ENCODE measurements at regions of chr1 and their contacts with region 1.

Region 1: DNA sequence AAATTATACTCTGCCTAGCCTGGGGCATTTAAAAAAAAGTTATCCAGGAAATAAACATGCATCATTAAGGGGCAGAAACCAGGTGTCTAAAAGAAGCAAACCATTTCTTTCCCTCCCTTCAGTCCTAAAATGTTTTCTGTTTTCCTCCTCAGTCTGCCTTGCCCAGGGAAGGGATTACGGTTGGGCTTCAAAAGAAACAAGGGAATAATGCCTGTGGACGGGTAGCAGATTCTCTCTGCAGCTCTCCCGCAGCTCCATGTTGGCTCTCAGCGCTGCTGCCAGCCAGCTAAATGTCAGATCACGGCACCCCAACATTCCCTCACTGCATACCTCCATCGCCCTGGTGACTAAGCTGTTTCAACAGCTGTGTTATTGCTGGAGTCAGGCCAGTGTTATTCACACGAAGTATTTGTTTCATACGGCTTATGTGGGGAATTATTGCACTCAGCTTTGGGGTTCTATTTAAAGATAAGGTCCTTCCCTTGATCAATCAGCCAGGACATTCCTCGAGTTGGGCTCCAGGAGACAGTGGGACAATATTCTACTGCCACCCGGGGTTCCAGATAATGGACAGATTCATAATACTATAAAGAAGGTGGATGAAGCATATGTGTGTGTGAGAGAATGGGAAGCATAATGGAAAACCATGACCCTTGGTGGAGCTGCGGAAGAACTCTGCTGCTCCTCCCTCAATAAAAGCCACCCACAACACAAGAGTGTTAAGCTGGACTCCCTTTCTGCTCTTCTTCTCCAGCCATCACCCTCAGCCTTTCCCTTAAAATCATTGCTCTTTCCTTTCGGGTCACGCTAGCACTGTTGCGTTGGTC is 58.2 kb downstream of the WLS start:
- DNase-seq: peak; percentile 76 to 91
- H3K4me3 ChIP-seq: peak overlapping the region; percentile 12; the same call in 1 of the 2 replicates
- H3K27ac ChIP-seq: 0 out of 2 replicates have a peak overlapping the region, but pooled peaks have one; percentile 3
- H3K4me1 ChIP-seq: peaks cover 53% of the 10 kb centered on the region
- H3K27me3 ChIP-seq: no peaks in the 10 kb centered on the region
- CTCF ChIP-seq: no peak

Region 2: GRCh38 chr1:67700692-67701410 is 473.3 kb before region 1 on chr1:
- CTCF ChIA-PET with region 1: no interaction called
- POLR2A ChIA-PET with region 1: no interaction called
- intact Hi-C with region 1: loop called (anchors 10 kb)
- DNase-seq: peak; percentile 84 to 93
- H3K4me3 ChIP-seq: no peak overlapping the region
- H3K27ac ChIP-seq: peak overlapping the region; percentile 63
- H3K4me1 ChIP-seq: peaks cover 18% of the 10 kb centered on the region
- H3K27me3 ChIP-seq: no peaks in the 10 kb centered on the region
- CTCF ChIP-seq: peak; percentile 55; the same call in 1 of the 2 replicates

Region 3: GRCh38 chr1:68197891-68198290 is 23.8 kb after region 1 on chr1:
- CTCF ChIA-PET with region 1: no interaction called
- POLR2A ChIA-PET with region 1: no interaction called
- intact Hi-C with region 1: loop called (anchors 1 kb)
- DNase-seq: peak in 1 of 2 experiments; percentile 97
- H3K4me3 ChIP-seq: peak overlapping the region; percentile 12; the same call in 1 of the 2 replicates
- H3K27ac ChIP-seq: peak overlapping the region; percentile 72
- H3K4me1 ChIP-seq: peaks cover 28% of the 10 kb centered on the region
- H3K27me3 ChIP-seq: no peaks in the 10 kb centered on the region
- CTCF ChIP-seq: no peak

Region 4: GRCh38 chr1:68232354-68233148 is 58.4 kb after region 1 on chr1 and contains the start of gene WLS:
- CTCF ChIA-PET with region 1: interaction called, 3 read pairs
- POLR2A ChIA-PET with region 1: interaction called, 4 read pairs
- intact Hi-C with region 1: loop called (anchors 2 kb)
- DNase-seq: peak in 1 of 2 experiments; percentile 59
- H3K4me3 ChIP-seq: peak within 1 kb of the TSS; percentile 61
- H3K27ac ChIP-seq: no peak within 1 kb of the TSS
- H3K4me1 ChIP-seq: peaks cover 6% of the 10 kb centered on the region; the same call in 1 of the 2 replicates
- H3K27me3 ChIP-seq: peaks cover 4% of the 10 kb centered on the region
- CTCF ChIP-seq: no peak; the same call in 1 of the 2 replicates
- total RNA-seq, gene WLS: 19.8 and 30.5 TPM in 2 replicates

Region 5: DNA sequence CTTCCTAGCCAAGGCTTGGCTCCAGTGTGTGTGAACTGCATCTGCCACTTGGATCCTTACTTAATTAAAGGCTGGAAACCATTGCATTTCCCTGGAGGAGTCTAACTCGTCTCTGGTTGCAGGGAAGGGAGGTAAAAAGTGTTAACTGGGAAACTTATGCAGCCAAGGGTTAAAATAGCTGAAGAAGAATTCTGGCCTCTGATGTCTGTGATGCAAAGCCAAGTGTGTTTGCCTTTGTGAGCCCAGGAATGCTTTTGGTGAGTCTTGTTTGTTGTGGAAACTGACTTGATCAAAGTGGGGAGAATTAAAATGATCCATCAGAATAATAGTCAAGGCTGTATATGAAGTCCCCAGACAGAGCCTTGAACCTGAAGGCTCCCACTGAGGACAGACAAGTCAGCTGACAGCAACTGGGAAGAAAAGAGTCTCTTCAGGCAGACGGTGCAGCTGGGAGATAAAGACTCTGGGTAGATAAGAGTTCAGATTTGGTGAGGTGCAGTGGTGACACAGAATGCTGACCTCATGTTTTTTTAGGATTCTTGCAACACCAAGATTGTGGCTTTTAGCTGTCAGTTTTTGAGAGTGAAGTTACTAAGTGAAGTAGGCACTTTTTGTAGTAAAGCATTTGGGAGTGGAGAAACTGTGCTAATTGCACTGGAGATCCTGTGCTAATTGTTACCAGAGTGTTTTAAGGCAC is 117.7 kb after region 1 on chr1:
- CTCF ChIA-PET with region 1: no interaction called
- POLR2A ChIA-PET with region 1: no interaction called
- intact Hi-C with region 1: no loop called
- DNase-seq: no peak
- H3K4me3 ChIP-seq: no peak overlapping the region
- H3K27ac ChIP-seq: no peak overlapping the region
- H3K4me1 ChIP-seq: no peaks in the 10 kb centered on the region
- H3K27me3 ChIP-seq: no peaks in the 10 kb centered on the region
- CTCF ChIP-seq: no peak

Region 6: GRCh38 chr1:68384321-68384813 is 210.2 kb after region 1 on chr1:
- CTCF ChIA-PET with region 1: no interaction called
- POLR2A ChIA-PET with region 1: no interaction called
- intact Hi-C with region 1: loop called (anchors 10 kb)
- DNase-seq: peak; percentile 63 to 99
- H3K4me3 ChIP-seq: no peak overlapping the region
- H3K27ac ChIP-seq: peak overlapping the region; percentile 79
- H3K4me1 ChIP-seq: peaks cover 25% of the 10 kb centered on the region
- H3K27me3 ChIP-seq: no peaks in the 10 kb centered on the region
- CTCF ChIP-seq: peak; percentile 72